ENCODE measurements at regions of chr1 and their contacts with region 1.

Region 1: GRCh38 chr1:229024528-229025130 is 246.3 kb upstream of the RAB4A start:
- DNase-seq: peak; percentile 59
- ATAC-seq: peak; percentile 29; the same call in 1 of the 3 replicates
- H3K4me3 ChIP-seq: no peak overlapping the region
- H3K27ac ChIP-seq: no peak overlapping the region
- H3K4me1 ChIP-seq: peaks cover 86% of the 10 kb centered on the region
- H3K27me3 ChIP-seq: no peaks in the 10 kb centered on the region
- CTCF ChIP-seq: no peak
- EP300 ChIP-seq: no peak
- POLR2A ChIP-seq: no peak
- RAD21 ChIP-seq: no peak

Region 2: DNA sequence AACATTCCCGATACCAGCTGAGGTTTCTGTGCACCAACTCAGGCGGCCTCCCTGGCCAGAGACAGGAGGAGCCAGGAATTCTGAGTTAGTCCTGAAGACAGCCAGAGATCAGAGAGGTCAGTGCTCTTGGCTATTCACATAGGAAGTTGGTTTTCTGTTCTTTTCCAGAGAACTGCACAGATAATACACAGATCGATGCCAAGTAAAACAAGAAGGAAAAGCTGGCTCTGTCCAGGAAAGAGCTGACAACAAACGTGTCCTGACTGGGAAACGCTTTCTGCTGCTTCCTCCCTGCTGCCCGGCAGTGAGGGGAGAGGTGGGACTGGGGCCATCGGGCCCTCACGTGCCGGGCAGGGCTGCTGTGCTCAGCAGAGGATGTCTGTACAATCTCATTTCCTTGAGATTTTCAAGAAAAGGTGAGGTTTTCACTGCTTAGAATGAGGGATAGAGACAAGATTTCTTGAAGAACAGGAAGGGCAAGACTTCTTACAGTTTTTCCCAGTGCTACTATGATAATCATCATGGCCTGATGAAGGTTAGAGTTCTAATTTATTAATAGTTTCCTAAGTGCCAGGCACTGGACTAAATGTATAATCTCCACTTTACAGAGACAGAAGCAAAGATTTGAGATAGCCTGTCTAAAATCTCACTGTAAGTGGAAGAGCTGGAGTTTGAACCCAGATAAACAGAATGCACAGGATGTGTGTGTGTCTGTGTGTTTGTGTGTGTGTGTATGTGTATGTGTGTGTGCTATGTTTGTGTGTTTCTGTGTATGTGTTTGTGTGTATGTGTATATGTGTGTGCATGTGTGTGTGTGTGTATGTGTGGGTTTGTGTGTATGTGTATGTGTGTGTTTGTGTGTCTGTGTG is 35.3 kb after region 1 on chr1:
- CTCF ChIA-PET with region 1: no interaction called
- POLR2A ChIA-PET with region 1: interaction called, 3 read pairs
- in situ Hi-C with region 1: no loop called
- intact Hi-C with region 1: loop called (anchors 2 kb)
- DNase-seq: no peak
- ATAC-seq: peak; percentile 28
- H3K4me3 ChIP-seq: no peak overlapping the region
- H3K27ac ChIP-seq: peak overlapping the region; percentile 4
- H3K4me1 ChIP-seq: peaks cover 73% of the 10 kb centered on the region
- H3K27me3 ChIP-seq: no peaks in the 10 kb centered on the region
- CTCF ChIP-seq: no peak
- EP300 ChIP-seq: no peak
- POLR2A ChIP-seq: no peak
- RAD21 ChIP-seq: no peak

Region 3: DNA sequence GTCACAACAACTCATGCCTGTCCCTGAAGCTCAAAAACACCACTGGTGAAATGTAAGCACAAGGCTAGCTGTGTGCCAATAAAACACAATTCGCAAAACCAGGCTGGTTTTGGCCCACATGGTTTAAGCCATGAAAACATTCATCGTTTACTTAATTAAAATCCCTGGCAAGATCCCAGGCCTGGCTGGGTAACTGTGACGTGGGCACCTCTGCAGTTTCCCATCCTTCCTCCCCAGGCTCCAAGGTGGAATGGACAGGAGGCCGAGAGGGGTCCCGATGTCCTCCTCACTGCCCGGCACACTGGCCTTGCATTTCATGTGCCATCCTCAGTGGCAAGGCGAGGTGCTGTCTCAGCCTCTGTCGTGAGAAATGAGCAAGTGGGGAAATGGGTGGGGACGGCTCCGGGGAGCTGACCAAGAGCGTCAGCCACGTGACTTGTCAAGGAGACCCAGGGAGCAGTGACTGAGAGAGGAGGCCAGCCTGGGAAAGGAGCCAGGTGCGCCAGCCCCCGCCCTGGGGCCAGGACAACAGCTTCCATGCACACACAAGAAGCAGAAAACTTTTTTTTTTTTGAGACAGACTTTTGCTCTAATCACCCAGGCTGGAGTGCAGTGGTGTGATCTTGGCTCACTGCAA is 93.2 kb after region 1 on chr1:
- CTCF ChIA-PET with region 1: no interaction called
- POLR2A ChIA-PET with region 1: no interaction called
- in situ Hi-C with region 1: no loop called
- intact Hi-C with region 1: no loop called
- DNase-seq: no peak
- ATAC-seq: no peak
- H3K4me3 ChIP-seq: no peak overlapping the region
- H3K27ac ChIP-seq: no peak overlapping the region
- H3K4me1 ChIP-seq: peaks cover 50% of the 10 kb centered on the region
- H3K27me3 ChIP-seq: no peaks in the 10 kb centered on the region
- CTCF ChIP-seq: no peak
- EP300 ChIP-seq: no peak
- POLR2A ChIP-seq: no peak
- RAD21 ChIP-seq: no peak